Activated CD4-positive, alpha-beta T cell treated with anti-CD3 and anti-CD28 coated beads, Interleukin-2, amount 10 ng/mL, durations not matched to agents 24 days and 14 days (primary cell): ENCODE measurements at regions of chr17 and their contacts with region 1.

Region 1: GRCh38 chr17:68435876-68436842 is 21.1 kb downstream of the WIPI1 start:
- DNase-seq: peak; percentile 95
- H3K4me3 Mint-ChIP-seq: peak overlapping the region; percentile 33
- H3K27ac Mint-ChIP-seq: peak overlapping the region; percentile 89
- H3K4me1 Mint-ChIP-seq: peaks cover 53% of the 10 kb centered on the region
- H3K27me3 Mint-ChIP-seq: no peaks in the 10 kb centered on the region

Region 2: GRCh38 chr17:68172461-68172954 is 263.7 kb before region 1 on chr17:
- intact Hi-C with region 1: loop called (anchors 2 kb)
- DNase-seq: peak; percentile 93
- H3K4me3 Mint-ChIP-seq: no peak overlapping the region
- H3K27ac Mint-ChIP-seq: no peak overlapping the region
- H3K4me1 Mint-ChIP-seq: peaks cover 23% of the 10 kb centered on the region
- H3K27me3 Mint-ChIP-seq: peaks cover 1% of the 10 kb centered on the region

Region 3: GRCh38 chr17:68260051-68260762 is 176.0 kb before region 1 on chr17:
- intact Hi-C with region 1: loop called (anchors 1 kb)
- DNase-seq: no peak
- H3K4me3 Mint-ChIP-seq: peak overlapping the region; percentile 79
- H3K27ac Mint-ChIP-seq: peak overlapping the region; percentile 86
- H3K4me1 Mint-ChIP-seq: peaks cover 56% of the 10 kb centered on the region
- H3K27me3 Mint-ChIP-seq: no peaks in the 10 kb centered on the region

Region 4: GRCh38 chr17:68302066-68302601 is 134.0 kb before region 1 on chr17:
- intact Hi-C with region 1: no loop called
- DNase-seq: no peak
- H3K4me3 Mint-ChIP-seq: no peak overlapping the region
- H3K27ac Mint-ChIP-seq: no peak overlapping the region
- H3K4me1 Mint-ChIP-seq: peaks cover 16% of the 10 kb centered on the region
- H3K27me3 Mint-ChIP-seq: peaks cover 3% of the 10 kb centered on the region

Region 5: DNA sequence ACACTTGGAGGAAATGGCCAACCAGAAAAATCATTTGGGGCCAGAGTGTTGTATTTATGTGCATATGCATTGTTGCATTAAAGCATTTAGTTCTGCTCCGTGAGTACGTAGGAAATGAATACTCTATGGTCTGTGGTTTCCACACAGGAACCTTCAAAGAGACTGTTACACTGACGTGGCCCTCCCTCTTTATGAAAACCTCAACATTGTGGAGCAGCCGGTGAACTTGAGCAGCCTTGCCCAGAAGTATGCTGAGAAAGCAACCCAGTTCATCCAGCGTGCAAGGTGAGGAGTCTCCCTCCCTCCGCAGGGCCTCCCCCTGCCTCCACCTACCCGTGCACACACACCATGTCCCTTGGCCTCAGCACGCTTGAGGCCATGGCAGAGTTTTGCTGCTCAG is 79.6 kb before region 1 on chr17:
- intact Hi-C with region 1: loop called (anchors 1 kb)
- DNase-seq: peak; percentile 93
- H3K4me3 Mint-ChIP-seq: peak overlapping the region; percentile 59
- H3K27ac Mint-ChIP-seq: peak overlapping the region; percentile 77
- H3K4me1 Mint-ChIP-seq: peaks cover 56% of the 10 kb centered on the region
- H3K27me3 Mint-ChIP-seq: no peaks in the 10 kb centered on the region

Region 6: GRCh38 chr17:68399638-68400403 is 36.3 kb before region 1 on chr17:
- intact Hi-C with region 1: loop called (anchors 5 kb)
- DNase-seq: peak; percentile 80
- H3K4me3 Mint-ChIP-seq: peak overlapping the region; percentile 62
- H3K27ac Mint-ChIP-seq: peak overlapping the region; percentile 88
- H3K4me1 Mint-ChIP-seq: peaks cover 33% of the 10 kb centered on the region
- H3K27me3 Mint-ChIP-seq: no peaks in the 10 kb centered on the region

Region 7: DNA sequence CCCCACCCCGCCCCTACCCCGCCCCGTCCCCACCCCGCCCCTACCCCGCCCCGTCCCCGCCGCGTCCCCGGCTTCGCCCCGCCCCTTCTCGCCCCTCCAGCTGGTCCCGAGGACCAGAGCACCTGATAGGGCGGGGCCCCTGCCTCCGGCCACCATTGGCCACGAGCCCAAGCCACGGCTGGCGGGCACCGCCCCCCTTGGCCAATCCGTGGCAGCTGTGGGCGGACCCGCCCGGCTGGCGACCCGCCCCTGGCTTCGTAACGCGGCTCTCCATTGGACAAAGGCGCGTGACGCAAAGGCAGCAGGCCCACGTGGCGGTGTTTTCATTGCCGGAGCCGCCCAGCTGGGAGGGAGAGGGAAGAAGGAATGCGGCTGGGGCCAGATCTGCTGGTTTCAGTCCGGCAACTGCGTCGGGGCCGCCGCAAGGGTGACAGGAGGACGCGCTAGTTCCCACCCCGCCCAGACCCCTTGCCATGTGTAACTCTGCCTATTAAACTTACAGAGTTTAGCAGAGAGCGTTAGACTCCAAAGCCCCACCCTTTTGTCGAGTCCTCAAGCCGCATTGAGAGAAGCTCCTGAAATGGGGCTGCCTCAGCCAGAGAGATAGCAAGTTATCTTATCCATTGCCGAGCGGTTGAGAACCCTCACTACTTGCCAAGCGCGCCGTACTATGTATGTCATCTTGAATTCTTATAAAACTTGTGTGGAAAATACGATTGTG is 21.5 kb after region 1 on chr17:
- intact Hi-C with region 1: no loop called
- DNase-seq: peak; percentile 100
- H3K4me3 Mint-ChIP-seq: peak overlapping the region; percentile 92
- H3K27ac Mint-ChIP-seq: peak overlapping the region; percentile 86
- H3K4me1 Mint-ChIP-seq: peaks cover 61% of the 10 kb centered on the region
- H3K27me3 Mint-ChIP-seq: no peaks in the 10 kb centered on the region